GM12878 (cell line): ENCODE measurements at regions of chr17 and their contacts with region 1.

Region 1: DNA sequence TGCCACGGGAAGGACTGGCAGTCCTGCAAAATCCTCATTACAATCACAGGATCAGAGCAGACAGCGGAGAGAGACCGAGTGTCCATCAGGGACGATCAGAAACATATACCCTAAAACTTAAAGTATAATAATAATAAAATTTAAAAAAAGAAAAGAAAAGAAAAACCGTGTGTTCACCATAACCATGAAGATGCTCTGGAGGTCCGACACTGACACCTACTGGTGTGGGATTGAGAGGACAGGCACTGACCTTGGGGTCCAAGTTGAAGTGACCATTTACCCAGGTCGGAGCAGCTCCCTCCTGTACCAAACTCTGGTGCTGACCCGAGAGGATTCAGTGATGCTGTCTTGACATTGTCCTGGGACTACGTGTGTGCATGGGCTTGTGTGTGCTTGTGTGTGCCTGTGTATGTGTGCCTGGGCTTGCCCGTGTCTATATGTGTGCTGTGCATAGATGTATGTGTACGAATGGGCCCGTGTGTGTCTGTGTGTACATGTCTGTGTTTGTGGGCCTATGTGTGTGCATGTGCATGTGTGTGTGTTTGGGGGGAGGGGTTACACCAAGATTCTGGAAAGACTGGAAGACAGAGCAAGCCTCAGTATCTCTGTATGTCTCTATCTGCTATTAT is 10.0 kb upstream of the CD300LD start:
- DNase-seq: no peak
- ATAC-seq: peak; percentile 85
- H3K4me3 ChIP-seq: no peak overlapping the region
- H3K27ac ChIP-seq: no peak overlapping the region
- H3K4me1 ChIP-seq: no peaks in the 10 kb centered on the region; the same call in 1 of the 2 replicates
- H3K27me3 ChIP-seq: peaks cover 2 to 4% of the 10 kb centered on the region in 2 experiments; a peak in 3 of 4 replicates
- CTCF ChIP-seq: peak; percentile 67 to 71 (median 70)
- EP300 ChIP-seq: no peak
- POLR2A ChIP-seq: no peak
- RAD21 ChIP-seq: peak; percentile 73

Region 2: GRCh38 chr17:73586921-73587602 is 1015.0 kb before region 1 on chr17:
- CTCF ChIA-PET with region 1: interaction called, 10 read pairs
- POLR2A ChIA-PET with region 1: no interaction called
- RAD21 ChIA-PET with region 1: no interaction called
- SMC1A ChIA-PET with region 1: no interaction called
- in situ Hi-C with region 1: no loop called
- intact Hi-C with region 1: no loop called
- DNase-seq: no peak
- ATAC-seq: no peak
- H3K4me3 ChIP-seq: no peak overlapping the region
- H3K27ac ChIP-seq: no peak overlapping the region
- H3K4me1 ChIP-seq: peaks cover 18% of the 10 kb centered on the region
- H3K27me3 ChIP-seq: peaks cover 0 to 5% of the 10 kb centered on the region in 2 experiments; a peak in 3 of 4 replicates
- CTCF ChIP-seq: no peak
- EP300 ChIP-seq: no peak
- POLR2A ChIP-seq: no peak
- RAD21 ChIP-seq: no peak

Region 3: GRCh38 chr17:73710095-73710592 is 891.9 kb before region 1 on chr17:
- CTCF ChIA-PET with region 1: no interaction called
- POLR2A ChIA-PET with region 1: no interaction called
- RAD21 ChIA-PET with region 1: no interaction called
- SMC1A ChIA-PET with region 1: no interaction called
- in situ Hi-C with region 1: no loop called
- intact Hi-C with region 1: no loop called
- DNase-seq: peak; percentile 5
- ATAC-seq: peak; percentile 81
- H3K4me3 ChIP-seq: no peak overlapping the region
- H3K27ac ChIP-seq: no peak overlapping the region
- H3K4me1 ChIP-seq: no peaks in the 10 kb centered on the region; the same call in 1 of the 2 replicates
- H3K27me3 ChIP-seq: no peaks in the 10 kb centered on the region
- CTCF ChIP-seq: peak; percentile 72 to 76 (median 72)
- EP300 ChIP-seq: no peak
- POLR2A ChIP-seq: no peak
- RAD21 ChIP-seq: peak; percentile 78

Region 4: DNA sequence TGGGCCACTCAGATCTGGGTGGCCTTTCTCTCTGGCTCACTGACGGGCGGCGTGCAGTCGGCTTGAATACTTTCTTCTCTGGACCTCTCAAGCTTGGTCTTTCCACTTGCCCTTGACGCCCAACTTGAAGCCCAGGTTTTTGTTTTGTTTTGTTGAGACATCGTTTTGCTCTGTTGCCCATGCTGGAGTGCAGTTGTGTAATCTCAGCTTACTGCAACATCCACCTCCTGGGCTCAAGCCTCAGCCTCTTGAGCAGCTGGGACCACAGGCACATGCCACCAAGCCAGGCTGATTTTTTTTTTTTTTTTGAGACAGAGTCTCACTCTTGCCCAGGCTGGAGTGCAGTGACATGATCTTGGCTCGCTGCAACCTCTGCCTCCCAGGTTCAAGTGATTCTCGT is 298.8 kb before region 1 on chr17:
- CTCF ChIA-PET with region 1: no interaction called
- POLR2A ChIA-PET with region 1: no interaction called
- RAD21 ChIA-PET with region 1: no interaction called
- SMC1A ChIA-PET with region 1: no interaction called
- in situ Hi-C with region 1: no loop called
- intact Hi-C with region 1: loop called (anchors 5 kb)
- DNase-seq: no peak
- ATAC-seq: no peak
- H3K4me3 ChIP-seq: no peak overlapping the region
- H3K27ac ChIP-seq: no peak overlapping the region
- H3K4me1 ChIP-seq: no peaks in the 10 kb centered on the region
- H3K27me3 ChIP-seq: no peaks in the 10 kb centered on the region
- CTCF ChIP-seq: no peak
- EP300 ChIP-seq: no peak
- POLR2A ChIP-seq: no peak
- RAD21 ChIP-seq: no peak

Region 5: DNA sequence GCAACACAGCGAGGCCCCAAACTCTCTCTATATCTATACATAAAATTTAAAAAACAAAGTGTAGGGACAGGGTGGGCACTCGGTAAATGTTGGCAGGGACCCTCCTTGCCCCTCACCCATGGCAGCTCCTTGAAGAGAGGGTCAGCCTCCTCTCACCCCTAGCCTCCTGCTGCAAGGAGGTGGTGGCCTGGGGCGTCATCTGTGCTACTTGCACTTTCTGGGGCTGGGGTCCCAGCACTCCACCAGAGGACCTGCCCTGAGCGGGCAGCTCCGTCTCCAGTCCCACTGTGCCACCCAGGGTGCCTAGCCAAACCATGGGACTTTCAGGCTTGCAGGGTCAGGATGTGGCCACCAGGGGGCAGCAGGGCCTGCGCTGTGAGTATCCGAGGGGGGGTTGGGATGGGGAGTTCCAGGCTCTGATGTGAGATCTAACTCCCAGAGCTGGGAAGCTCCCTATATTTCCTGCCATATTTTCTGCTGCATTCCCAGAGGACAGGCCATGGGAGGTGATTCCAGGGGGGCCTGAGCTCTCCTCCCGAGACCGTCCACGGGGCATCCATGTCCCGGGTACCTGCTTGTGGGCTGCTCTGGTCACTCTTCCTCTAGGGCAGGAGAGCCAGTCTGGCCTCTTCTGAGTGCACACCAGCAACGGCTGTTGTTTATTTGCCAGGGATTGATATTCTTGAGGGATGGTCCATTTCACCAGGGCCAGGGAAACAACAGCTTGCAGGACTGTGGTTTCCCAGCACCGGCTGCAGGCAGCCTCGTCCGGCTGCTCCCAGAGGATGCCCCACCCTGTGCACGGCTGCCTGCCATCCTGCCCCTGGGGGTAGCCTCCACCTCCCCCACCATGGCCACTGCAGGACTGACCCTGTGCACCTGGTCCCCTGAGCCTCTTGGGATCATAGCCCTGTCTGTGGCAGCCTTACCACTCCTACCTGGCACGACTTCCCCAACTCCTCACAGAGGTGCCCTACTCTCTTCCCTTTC is 233.7 kb before region 1 on chr17:
- CTCF ChIA-PET with region 1: interaction called, 15 read pairs
- POLR2A ChIA-PET with region 1: no interaction called
- RAD21 ChIA-PET with region 1: interaction called, 10 read pairs
- SMC1A ChIA-PET with region 1: no interaction called
- in situ Hi-C with region 1: no loop called
- intact Hi-C with region 1: loop called (anchors 2 kb)
- DNase-seq: no peak
- ATAC-seq: peak; percentile 93
- H3K4me3 ChIP-seq: no peak overlapping the region
- H3K27ac ChIP-seq: no peak overlapping the region
- H3K4me1 ChIP-seq: peaks cover 7% of the 10 kb centered on the region
- H3K27me3 ChIP-seq: no peaks in the 10 kb centered on the region; a peak in 3 of 4 replicates
- CTCF ChIP-seq: peak; percentile 93 to 97 (median 94)
- EP300 ChIP-seq: no peak
- POLR2A ChIP-seq: no peak
- RAD21 ChIP-seq: peak; percentile 73

Region 6: GRCh38 chr17:74545843-74546230 is 56.2 kb before region 1 on chr17 and contains the start of gene CD300C:
- CTCF ChIA-PET with region 1: no interaction called
- POLR2A ChIA-PET with region 1: no interaction called
- RAD21 ChIA-PET with region 1: no interaction called
- SMC1A ChIA-PET with region 1: no interaction called
- in situ Hi-C with region 1: no loop called
- intact Hi-C with region 1: no loop called
- DNase-seq: no peak
- ATAC-seq: peak; percentile 61
- H3K4me3 ChIP-seq: no peak within 1 kb of the TSS
- H3K27ac ChIP-seq: no peak within 1 kb of the TSS
- H3K4me1 ChIP-seq: no peaks in the 10 kb centered on the region
- H3K27me3 ChIP-seq: no peaks in the 10 kb centered on the region; a peak in 1 of 4 replicates
- CTCF ChIP-seq: no peak
- EP300 ChIP-seq: no peak
- POLR2A ChIP-seq: no peak
- RAD21 ChIP-seq: no peak
- polyA plus RNA-seq, gene CD300C: 0.13 TPM in 1 of 2 experiments, not detected in the other

Region 7: DNA sequence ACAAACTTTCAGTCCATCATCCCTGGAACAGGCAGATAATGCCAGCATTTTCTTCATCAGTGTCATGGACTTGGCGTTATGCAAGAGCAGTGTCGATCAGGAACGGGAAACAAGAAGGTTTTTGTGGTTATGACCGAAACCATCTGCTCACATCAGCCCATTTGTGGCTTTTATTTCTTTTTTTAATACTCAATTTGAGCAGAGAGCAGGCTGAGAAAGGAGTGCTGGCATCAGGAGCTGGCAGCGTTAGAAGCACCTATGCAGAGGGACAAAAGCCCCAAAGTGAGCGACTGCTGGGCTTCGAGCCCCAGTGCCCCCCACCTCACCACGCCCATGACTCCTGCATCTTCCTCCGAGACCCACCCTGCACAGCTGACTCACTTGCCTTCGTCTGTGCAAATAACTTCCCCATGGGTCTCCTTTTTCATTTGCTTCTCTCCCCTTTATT is 37.7 kb after region 1 on chr17:
- CTCF ChIA-PET with region 1: interaction called, 11 read pairs
- POLR2A ChIA-PET with region 1: interaction called, 3 read pairs
- RAD21 ChIA-PET with region 1: interaction called, 5 read pairs
- SMC1A ChIA-PET with region 1: interaction called, 3 read pairs
- in situ Hi-C with region 1: no loop called
- intact Hi-C with region 1: no loop called
- DNase-seq: peak; percentile 42
- ATAC-seq: peak; percentile 58
- H3K4me3 ChIP-seq: no peak overlapping the region
- H3K27ac ChIP-seq: no peak overlapping the region
- H3K4me1 ChIP-seq: peaks cover 35% of the 10 kb centered on the region
- H3K27me3 ChIP-seq: peaks cover 0 to 2% of the 10 kb centered on the region in 2 experiments; a peak in 2 of 4 replicates
- CTCF ChIP-seq: no peak
- EP300 ChIP-seq: no peak
- POLR2A ChIP-seq: no peak
- RAD21 ChIP-seq: no peak

Region 8: GRCh38 chr17:74759243-74759801 is 157.3 kb after region 1 on chr17:
- CTCF ChIA-PET with region 1: no interaction called
- POLR2A ChIA-PET with region 1: no interaction called
- RAD21 ChIA-PET with region 1: no interaction called
- SMC1A ChIA-PET with region 1: no interaction called
- in situ Hi-C with region 1: no loop called
- intact Hi-C with region 1: no loop called
- DNase-seq: no peak
- ATAC-seq: peak; percentile 90
- H3K4me3 ChIP-seq: no peak overlapping the region
- H3K27ac ChIP-seq: peak overlapping the region; percentile 1
- H3K4me1 ChIP-seq: peaks cover 21% of the 10 kb centered on the region
- H3K27me3 ChIP-seq: no peaks in the 10 kb centered on the region
- CTCF ChIP-seq: peak; percentile 16 to 32 (median 30); a peak in 3 of 6 replicates
- EP300 ChIP-seq: no peak
- POLR2A ChIP-seq: no peak
- RAD21 ChIP-seq: peak; percentile 28

Region 9: DNA sequence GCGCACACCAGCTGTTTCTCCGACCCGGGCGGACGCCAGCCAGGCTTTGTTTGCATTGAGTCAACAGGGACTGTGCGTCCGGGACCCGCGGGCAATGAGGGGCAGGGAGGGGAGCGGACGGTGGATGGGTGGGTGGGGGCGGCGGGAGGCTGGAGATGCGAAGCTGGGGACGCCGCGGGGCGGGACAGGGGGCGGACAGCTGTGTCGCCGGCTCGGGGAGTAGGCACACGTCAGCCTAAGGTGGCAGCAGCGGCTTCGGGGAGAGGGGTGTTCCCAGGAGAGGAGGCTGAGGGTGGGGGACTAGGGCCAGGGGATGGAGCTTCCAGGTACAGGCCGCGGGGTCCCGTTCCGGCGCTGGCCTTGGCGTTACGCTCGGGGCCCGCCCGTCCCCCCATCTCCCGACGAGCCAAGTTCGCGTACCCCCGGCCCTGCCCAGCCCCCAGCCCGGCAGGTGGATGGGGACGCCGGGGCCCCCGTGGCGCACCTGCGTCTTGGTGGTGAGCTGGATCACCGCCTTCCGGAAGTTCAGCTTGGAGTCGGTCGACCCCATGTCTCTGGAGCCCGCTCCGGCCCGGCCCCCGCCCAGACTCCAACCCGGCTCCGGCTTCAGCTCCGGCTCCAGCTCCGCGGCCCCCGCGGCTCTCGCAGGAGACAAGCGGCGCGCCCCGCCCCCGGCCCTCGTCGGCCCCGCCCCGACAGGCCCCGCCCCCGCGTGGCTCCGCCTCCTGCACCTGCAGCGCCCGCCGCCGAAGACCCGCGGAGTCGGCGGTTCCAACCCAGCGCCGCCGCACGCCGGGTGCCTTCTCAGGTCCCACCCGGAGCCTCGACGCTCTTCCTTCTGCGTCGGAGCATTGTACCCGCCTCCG is 370.3 kb after region 1 on chr17 and contains the start of gene HID1:
- CTCF ChIA-PET with region 1: no interaction called
- POLR2A ChIA-PET with region 1: no interaction called
- RAD21 ChIA-PET with region 1: no interaction called
- SMC1A ChIA-PET with region 1: no interaction called
- in situ Hi-C with region 1: no loop called
- intact Hi-C with region 1: no loop called
- DNase-seq: no peak
- ATAC-seq: peak; percentile 90
- H3K4me3 ChIP-seq: 0 out of 2 replicates have a peak within 1 kb of the TSS, but pooled peaks have one; percentile 55
- H3K27ac ChIP-seq: no peak within 1 kb of the TSS
- H3K4me1 ChIP-seq: no peaks in the 10 kb centered on the region
- H3K27me3 ChIP-seq: peaks cover 7 to 11% of the 10 kb centered on the region in 2 experiments; a peak in 3 of 4 replicates
- CTCF ChIP-seq: no peak
- EP300 ChIP-seq: no peak
- POLR2A ChIP-seq: no peak; the same call in 1 of the 2 replicates
- RAD21 ChIP-seq: no peak
- polyA plus RNA-seq, gene HID1: not detected